ENCODE measurements at regions of chr19 and their contacts with region 1.

Region 1: GRCh38 chr19:35882114-35882832 is 13.9 kb downstream of the APLP1 start:
- DNase-seq: peak; percentile 67
- ATAC-seq: no peak
- H3K4me3 ChIP-seq: no peak overlapping the region
- H3K27ac ChIP-seq: no peak overlapping the region
- H3K4me1 ChIP-seq: peaks cover 2 to 11% of the 10 kb centered on the region in 2 experiments; a peak in 2 of 4 replicates
- H3K27me3 ChIP-seq: no peaks in the 10 kb centered on the region
- CTCF ChIP-seq: peak; percentile 49 to 85 (median 50); a peak in 5 of 6 replicates
- POLR2A ChIP-seq: no peak
- RAD21 ChIP-seq: peak; percentile 86

Region 2: DNA sequence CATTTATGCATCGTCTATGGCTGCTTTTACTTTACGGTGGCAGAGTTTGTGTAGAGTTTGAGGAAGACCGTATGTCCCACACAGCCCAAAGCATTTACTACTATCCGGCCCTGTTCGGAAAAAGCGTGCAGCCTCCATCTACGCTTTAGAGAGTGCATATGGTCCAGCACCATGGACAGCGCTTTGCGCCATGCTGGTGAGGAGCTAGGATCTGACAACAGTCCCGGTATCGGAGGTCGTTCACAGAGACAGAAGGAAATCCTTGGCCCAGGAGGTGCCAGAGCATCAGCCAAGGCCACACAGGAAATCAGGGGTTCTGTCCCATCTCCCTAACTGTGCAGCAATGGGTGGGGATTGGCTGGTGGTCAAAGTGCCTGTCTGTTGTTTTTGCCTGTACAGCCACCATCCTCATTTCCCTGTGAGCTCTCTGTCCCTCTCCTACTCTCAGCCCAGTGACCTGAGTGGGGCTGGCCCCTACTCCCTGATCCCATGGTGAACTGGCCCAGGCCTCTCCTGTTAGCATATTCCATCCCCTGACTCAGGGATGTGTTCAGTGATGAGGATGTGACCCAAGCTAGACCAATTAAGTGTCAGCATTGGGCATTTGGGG is 53.5 kb before region 1 on chr19:
- CTCF ChIA-PET with region 1: no interaction called
- POLR2A ChIA-PET with region 1: no interaction called
- RAD21 ChIA-PET with region 1: no interaction called
- intact Hi-C with region 1: loop called (anchors 2 kb)
- DNase-seq: no peak
- ATAC-seq: peak; percentile 60
- H3K4me3 ChIP-seq: no peak overlapping the region
- H3K27ac ChIP-seq: no peak overlapping the region
- H3K4me1 ChIP-seq: no peaks in the 10 kb centered on the region
- H3K27me3 ChIP-seq: peaks cover 33% of the 10 kb centered on the region
- CTCF ChIP-seq: no peak
- POLR2A ChIP-seq: no peak
- RAD21 ChIP-seq: no peak

Region 3: DNA sequence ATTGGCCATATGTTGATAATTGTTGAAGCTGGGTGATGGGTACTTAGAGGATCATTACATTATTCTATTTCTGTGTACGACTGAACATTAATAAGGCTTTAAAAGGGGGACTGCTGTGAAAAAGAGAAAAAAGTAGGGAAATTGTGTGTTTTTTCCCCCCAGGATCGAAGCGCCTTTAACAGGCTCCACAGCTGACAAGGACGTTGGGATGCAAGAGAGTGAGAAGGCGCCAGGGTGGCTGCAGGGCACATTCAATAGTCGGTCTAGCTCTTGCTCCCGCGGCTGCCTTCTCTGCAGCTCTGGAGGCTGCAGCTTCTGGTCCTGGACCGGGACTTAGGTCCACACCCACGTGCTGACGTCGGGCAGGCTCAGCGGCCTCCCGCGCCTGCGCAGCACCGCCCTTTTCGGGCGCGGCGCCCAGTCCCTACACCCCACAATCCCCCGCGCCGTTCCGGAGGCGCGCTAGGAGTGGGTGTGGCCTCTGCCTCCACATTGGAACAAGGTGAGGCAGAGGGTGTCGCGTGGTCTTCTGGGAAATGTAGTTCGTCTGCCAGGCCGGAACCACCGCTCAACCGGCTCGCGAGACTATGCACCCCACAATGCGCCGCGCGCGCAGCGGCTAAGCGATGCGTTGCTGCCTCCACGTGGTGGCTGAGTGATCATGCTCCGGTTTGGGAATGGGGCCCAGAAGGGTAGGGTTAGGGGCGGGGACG is 49.0 kb after region 1 on chr19:
- CTCF ChIA-PET with region 1: interaction called, 29 read pairs
- POLR2A ChIA-PET with region 1: interaction called, 7 read pairs
- RAD21 ChIA-PET with region 1: interaction called, 4 to 16 read pairs
- intact Hi-C with region 1: loop called (anchors 1 kb)
- DNase-seq: peak; percentile 99
- ATAC-seq: peak; percentile 95
- H3K4me3 ChIP-seq: peak overlapping the region; percentile 36 to 48
- H3K27ac ChIP-seq: peak overlapping the region; percentile 55
- H3K4me1 ChIP-seq: peaks cover 10 to 22% of the 10 kb centered on the region in 2 experiments; a peak in 3 of 4 replicates
- H3K27me3 ChIP-seq: no peaks in the 10 kb centered on the region
- CTCF ChIP-seq: peak; percentile 73 to 96 (median 85)
- POLR2A ChIP-seq: peak; percentile 98
- RAD21 ChIP-seq: peak; percentile 100

Region 4: GRCh38 chr19:36054119-36054732 is 172.0 kb after region 1 on chr19 and contains the start of gene THAP8:
- CTCF ChIA-PET with region 1: no interaction called
- POLR2A ChIA-PET with region 1: no interaction called
- RAD21 ChIA-PET with region 1: interaction called in 1 of 2 experiments, 5 read pairs
- intact Hi-C with region 1: loop called (anchors 10 kb)
- DNase-seq: peak; percentile 97
- ATAC-seq: peak; percentile 86
- H3K4me3 ChIP-seq: peak within 1 kb of the TSS; percentile 51 to 74
- H3K27ac ChIP-seq: peak within 1 kb of the TSS; percentile 95
- H3K4me1 ChIP-seq: peaks cover 19 to 43% of the 10 kb centered on the region in 2 experiments
- H3K27me3 ChIP-seq: no peaks in the 10 kb centered on the region
- CTCF ChIP-seq: peak in 2 of 3 experiments; percentile 49; a peak in 2 of 6 replicates
- POLR2A ChIP-seq: peak; percentile 56
- RAD21 ChIP-seq: 0 out of 2 replicates have a peak, but pooled peaks have one; percentile 11
- total RNA-seq, gene THAP8: 1.7 TPM

Measured in HCT116 (cell line).